Activated CD4-positive, alpha-beta T cell treated with anti-CD3 and anti-CD28 coated beads for 36 hours (primary cell): ENCODE measurements at regions of chr7 and their contacts with region 1.

Region 1: GRCh38 chr7:116984917-116985316 is 31.6 kb downstream of the ST7 start:
- DNase-seq: no peak
- ATAC-seq: peak; percentile 39
- H3K4me3 Mint-ChIP-seq: no peak overlapping the region
- H3K27ac Mint-ChIP-seq: no peak overlapping the region
- H3K4me1 Mint-ChIP-seq: peaks cover 2% of the 10 kb centered on the region
- H3K27me3 Mint-ChIP-seq: no peaks in the 10 kb centered on the region

Region 2: DNA sequence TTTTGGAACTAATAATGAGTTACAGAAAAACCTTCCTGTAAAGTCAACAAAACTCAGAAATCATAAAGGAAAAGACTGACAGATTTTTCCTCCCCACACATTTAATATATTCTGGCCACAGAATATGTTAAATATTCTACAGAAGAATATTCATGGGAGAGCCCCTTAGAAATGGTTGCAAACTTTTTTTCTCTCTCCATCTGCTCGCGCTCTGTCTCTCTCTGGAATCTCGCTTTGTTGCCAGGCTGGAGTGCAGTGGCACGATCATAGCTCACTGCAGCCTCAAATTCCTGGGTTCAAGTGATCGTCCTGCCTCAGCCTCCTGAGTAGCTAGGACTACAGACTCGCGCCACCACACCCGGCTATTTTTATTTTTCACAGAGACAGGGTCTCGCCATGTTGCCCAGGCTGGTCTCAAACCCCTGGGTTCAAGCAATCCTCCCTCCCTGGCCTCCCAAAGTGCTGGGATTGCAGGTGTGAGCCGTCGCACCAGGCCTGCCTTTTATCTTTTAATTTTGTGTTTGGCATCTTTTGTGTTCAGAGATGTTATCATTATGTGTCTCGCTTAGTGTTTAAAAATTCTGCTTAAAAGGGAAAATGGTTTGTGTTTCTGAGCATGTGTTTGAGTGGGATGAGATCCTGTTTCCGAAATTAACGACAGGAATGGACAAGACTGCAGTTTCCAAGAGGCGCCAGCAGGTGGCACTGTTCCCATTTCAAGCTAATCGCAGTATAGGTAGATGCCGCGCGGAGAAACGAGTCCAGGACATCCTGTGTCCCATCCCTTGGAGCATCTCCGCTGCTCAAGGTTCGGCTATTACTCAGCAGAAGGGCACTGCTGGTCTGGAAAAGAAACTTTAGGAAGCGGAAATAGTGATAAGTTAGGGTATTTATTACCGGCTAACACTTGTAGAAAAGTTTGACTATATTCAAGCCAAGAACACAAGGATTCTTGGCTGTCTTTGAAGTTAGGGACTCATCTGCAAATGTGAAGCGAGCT is 54.7 kb before region 1 on chr7:
- CTCF ChIA-PET with region 1: interaction called, 4 read pairs
- POLR2A ChIA-PET with region 1: no interaction called
- intact Hi-C with region 1: loop called (anchors 2 kb)
- DNase-seq: peak; percentile 86
- ATAC-seq: peak; percentile 85
- H3K4me3 Mint-ChIP-seq: no peak overlapping the region
- H3K27ac Mint-ChIP-seq: no peak overlapping the region
- H3K4me1 Mint-ChIP-seq: peaks cover 6% of the 10 kb centered on the region
- H3K27me3 Mint-ChIP-seq: peaks cover 3% of the 10 kb centered on the region

Region 3: DNA sequence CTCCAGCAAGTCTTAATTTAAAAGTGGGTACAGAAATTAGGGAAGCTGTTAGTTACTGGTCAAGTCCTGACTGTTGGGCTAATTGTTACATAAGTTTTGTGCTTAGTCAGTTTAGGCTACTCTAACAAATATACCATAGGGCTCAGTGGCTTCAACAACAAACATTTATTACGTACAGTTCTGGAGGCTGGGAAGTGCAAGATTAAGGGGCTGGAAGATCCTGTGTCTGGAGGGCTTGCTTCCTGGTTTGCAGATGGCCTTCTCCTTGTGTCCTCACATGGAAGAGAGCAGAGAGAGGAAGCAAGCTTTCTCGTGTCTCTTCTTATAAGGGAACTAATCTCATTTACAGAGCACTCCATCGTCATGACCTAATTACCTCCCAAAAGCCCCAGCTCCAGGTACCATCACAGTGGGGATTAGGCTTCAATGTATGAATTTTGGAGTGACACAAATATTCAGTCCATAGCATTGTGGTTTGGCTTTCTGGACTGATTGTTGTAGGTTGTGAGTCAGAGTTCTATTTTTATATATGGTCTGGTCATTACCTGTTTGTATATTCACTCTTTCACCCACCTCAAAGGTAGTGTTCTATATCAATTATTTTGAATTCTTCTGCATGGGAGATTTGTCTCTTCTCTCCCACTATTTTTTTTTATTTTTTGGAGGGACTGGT is 14.5 kb before region 1 on chr7:
- CTCF ChIA-PET with region 1: interaction called, 22 read pairs
- POLR2A ChIA-PET with region 1: no interaction called
- intact Hi-C with region 1: no loop called
- DNase-seq: no peak
- ATAC-seq: no peak
- H3K4me3 Mint-ChIP-seq: no peak overlapping the region
- H3K27ac Mint-ChIP-seq: no peak overlapping the region
- H3K4me1 Mint-ChIP-seq: peaks cover 7% of the 10 kb centered on the region
- H3K27me3 Mint-ChIP-seq: no peaks in the 10 kb centered on the region

Region 4: DNA sequence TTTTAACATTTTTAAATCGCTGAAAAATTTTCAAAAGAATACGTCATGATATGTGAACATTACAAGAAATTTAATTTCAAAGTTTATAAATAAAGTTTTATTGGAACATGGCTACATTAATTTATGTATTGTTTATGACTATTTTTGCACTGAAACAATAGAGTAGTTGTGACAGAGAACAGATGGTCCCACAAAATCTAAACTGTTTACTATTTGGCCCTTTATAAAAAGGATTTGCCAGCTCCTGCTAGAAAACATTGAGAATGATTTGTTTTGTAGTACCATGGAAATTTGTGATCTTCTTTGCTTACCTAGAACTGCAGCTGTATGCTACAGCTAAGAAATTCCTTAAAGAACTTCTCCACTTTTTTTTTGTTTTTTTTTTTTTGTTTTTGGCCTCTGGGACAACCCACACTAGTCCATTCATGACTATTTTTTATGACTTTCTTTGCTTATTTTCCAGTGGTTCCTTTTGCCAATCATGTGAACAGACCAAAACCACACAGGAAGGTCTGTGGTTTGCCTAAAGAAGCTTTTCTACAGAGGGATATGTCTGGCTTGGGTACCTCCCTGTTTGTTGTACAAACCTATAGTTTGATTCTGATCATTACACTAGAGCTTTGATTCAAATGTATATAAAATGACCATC is 24.1 kb after region 1 on chr7:
- CTCF ChIA-PET with region 1: interaction called, 48 read pairs
- POLR2A ChIA-PET with region 1: no interaction called
- intact Hi-C with region 1: loop called in 1 of 2 experiments (anchors 1 kb)
- DNase-seq: peak; percentile 45
- ATAC-seq: peak; percentile 14
- H3K4me3 Mint-ChIP-seq: no peak overlapping the region
- H3K27ac Mint-ChIP-seq: no peak overlapping the region
- H3K4me1 Mint-ChIP-seq: peaks cover 67% of the 10 kb centered on the region
- H3K27me3 Mint-ChIP-seq: peaks cover 1% of the 10 kb centered on the region

Region 5: GRCh38 chr7:117119192-117119924 is 134.4 kb after region 1 on chr7:
- CTCF ChIA-PET with region 1: interaction called, 213 read pairs
- POLR2A ChIA-PET with region 1: interaction called, 3 read pairs
- intact Hi-C with region 1: loop called (anchors 1 kb)
- DNase-seq: peak; percentile 87
- ATAC-seq: no peak
- H3K4me3 Mint-ChIP-seq: no peak overlapping the region
- H3K27ac Mint-ChIP-seq: no peak overlapping the region
- H3K4me1 Mint-ChIP-seq: peaks cover under 1% of the 10 kb centered on the region
- H3K27me3 Mint-ChIP-seq: no peaks in the 10 kb centered on the region